ENCODE measurements at regions of chr1 and their contacts with region 1.

Region 1: GRCh38 chr1:154479764-154480421 is 22.1 kb upstream of the TDRD10 start:
- DNase-seq: peak; percentile 69
- ATAC-seq: peak; percentile 94
- H3K4me3 Mint-ChIP-seq: no peak overlapping the region
- H3K27ac Mint-ChIP-seq: no peak overlapping the region
- H3K4me1 Mint-ChIP-seq: peaks cover 18% of the 10 kb centered on the region
- H3K27me3 Mint-ChIP-seq: peaks cover 4% of the 10 kb centered on the region
- CTCF ChIP-seq: peak; percentile 98

Region 2: DNA sequence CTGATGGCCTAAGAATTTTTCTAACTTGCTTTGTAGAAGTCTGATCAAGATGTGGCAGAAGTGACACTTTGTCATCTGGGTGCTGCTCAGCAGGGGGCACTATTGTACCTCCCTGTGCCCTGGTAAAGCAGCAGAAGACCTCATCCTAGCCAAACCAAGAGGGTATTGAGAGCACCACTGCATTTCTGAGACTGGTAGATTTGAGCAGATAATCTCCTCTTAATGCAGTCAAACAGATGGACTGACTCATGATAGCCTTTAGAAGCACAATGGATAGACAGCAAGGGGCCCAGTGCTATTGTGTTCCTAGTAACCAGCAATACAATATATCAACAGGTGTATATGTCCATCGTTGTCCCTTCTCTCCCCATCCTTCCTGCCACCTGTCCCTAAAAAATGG is 293.7 kb before region 1 on chr1:
- CTCF ChIA-PET with region 1: no interaction called
- POLR2A ChIA-PET with region 1: no interaction called
- intact Hi-C with region 1: no loop called
- DNase-seq: peak; percentile 91
- ATAC-seq: no peak
- H3K4me3 Mint-ChIP-seq: no peak overlapping the region
- H3K27ac Mint-ChIP-seq: no peak overlapping the region
- H3K4me1 Mint-ChIP-seq: peaks cover 13% of the 10 kb centered on the region
- H3K27me3 Mint-ChIP-seq: peaks cover 2% of the 10 kb centered on the region
- CTCF ChIP-seq: peak; percentile 80

Region 3: GRCh38 chr1:154295408-154296235 is 184.3 kb before region 1 on chr1:
- CTCF ChIA-PET with region 1: no interaction called
- POLR2A ChIA-PET with region 1: no interaction called
- intact Hi-C with region 1: no loop called
- DNase-seq: no peak
- ATAC-seq: no peak
- H3K4me3 Mint-ChIP-seq: no peak overlapping the region
- H3K27ac Mint-ChIP-seq: no peak overlapping the region
- H3K4me1 Mint-ChIP-seq: no peaks in the 10 kb centered on the region
- H3K27me3 Mint-ChIP-seq: no peaks in the 10 kb centered on the region
- CTCF ChIP-seq: no peak

Region 4: GRCh38 chr1:154344977-154345837 is 134.7 kb before region 1 on chr1:
- CTCF ChIA-PET with region 1: interaction called, 6 read pairs
- POLR2A ChIA-PET with region 1: interaction called, 4 read pairs
- intact Hi-C with region 1: loop called (anchors 10 kb)
- DNase-seq: peak; percentile 81
- ATAC-seq: no peak
- H3K4me3 Mint-ChIP-seq: no peak overlapping the region
- H3K27ac Mint-ChIP-seq: peak overlapping the region; percentile 78
- H3K4me1 Mint-ChIP-seq: peaks cover 76% of the 10 kb centered on the region
- H3K27me3 Mint-ChIP-seq: no peaks in the 10 kb centered on the region
- CTCF ChIP-seq: peak; percentile 84

Region 5: GRCh38 chr1:154466921-154467417 is 12.9 kb before region 1 on chr1:
- CTCF ChIA-PET with region 1: interaction called, 15 read pairs
- POLR2A ChIA-PET with region 1: no interaction called
- intact Hi-C with region 1: no loop called
- DNase-seq: no peak
- ATAC-seq: no peak
- H3K4me3 Mint-ChIP-seq: no peak overlapping the region
- H3K27ac Mint-ChIP-seq: no peak overlapping the region
- H3K4me1 Mint-ChIP-seq: peaks cover 40% of the 10 kb centered on the region
- H3K27me3 Mint-ChIP-seq: no peaks in the 10 kb centered on the region
- CTCF ChIP-seq: no peak

Region 6: DNA sequence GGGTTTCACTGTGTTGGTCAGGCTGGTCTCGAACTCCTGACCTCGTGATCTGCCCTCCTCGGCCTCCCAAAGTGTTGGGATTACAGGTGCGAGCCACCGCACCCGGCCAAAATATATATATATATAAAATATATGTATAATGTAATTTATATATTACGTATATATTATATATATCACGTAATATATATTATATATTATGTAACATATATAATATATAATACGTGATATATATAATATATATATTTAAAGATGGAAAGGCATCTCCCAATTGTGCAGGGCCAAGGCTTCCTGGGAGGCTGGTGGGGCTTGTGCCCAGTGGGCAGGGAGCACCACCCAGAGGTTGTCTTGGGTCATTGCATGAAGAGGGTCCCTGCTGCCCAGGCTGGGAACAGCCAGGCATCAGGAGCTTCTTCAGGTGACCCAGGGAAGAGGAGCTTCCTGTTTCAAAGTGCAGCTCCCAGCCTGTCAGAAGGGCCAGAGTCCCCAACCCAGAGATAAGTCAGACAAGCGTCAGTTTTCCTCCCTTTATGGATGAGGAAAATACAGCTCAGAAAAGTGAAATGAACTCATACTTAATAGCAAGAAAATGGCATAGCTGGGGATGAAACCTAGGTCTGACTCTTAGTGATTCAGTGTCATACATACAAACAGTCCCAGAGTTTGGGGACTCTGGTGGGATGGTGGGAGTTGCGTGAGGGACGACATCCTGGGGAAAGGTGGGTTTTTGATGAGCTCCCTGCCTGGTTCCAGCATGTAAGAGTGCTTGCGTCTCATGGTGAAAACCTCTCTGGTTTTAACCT is 66.6 kb after region 1 on chr1:
- CTCF ChIA-PET with region 1: interaction called, 127 read pairs
- POLR2A ChIA-PET with region 1: interaction called, 3 read pairs
- intact Hi-C with region 1: loop called (anchors 2 kb)
- DNase-seq: peak; percentile 72
- ATAC-seq: peak; percentile 98
- H3K4me3 Mint-ChIP-seq: no peak overlapping the region
- H3K27ac Mint-ChIP-seq: no peak overlapping the region
- H3K4me1 Mint-ChIP-seq: peaks cover 12% of the 10 kb centered on the region
- H3K27me3 Mint-ChIP-seq: no peaks in the 10 kb centered on the region
- CTCF ChIP-seq: peak; percentile 79